ENCODE measurements at regions of chr14 and their contacts with region 1.

Region 1: GRCh38 chr14:35404449-35405303 is at the start of gene NFKBIA:
- DNase-seq: peak; percentile 96 to 97
- ATAC-seq: peak; percentile 51 to 81 (median 63)
- H3K4me3 ChIP-seq: peak within 1 kb of the TSS; percentile 90
- H3K4me3 Mint-ChIP-seq: peak within 1 kb of the TSS; percentile 99
- H3K27ac ChIP-seq: peak within 1 kb of the TSS; percentile 96
- H3K27ac Mint-ChIP-seq: peak within 1 kb of the TSS; percentile 98
- H3K4me1 ChIP-seq: peaks cover 46% of the 10 kb centered on the region
- H3K4me1 Mint-ChIP-seq: peaks cover 59 to 63% of the 10 kb centered on the region in 2 donors
- H3K27me3 ChIP-seq: no peaks in the 10 kb centered on the region
- H3K27me3 Mint-ChIP-seq: no peaks in the 10 kb centered on the region
- CTCF ChIP-seq: no peak
- total RNA-seq, gene NFKBIA: 2,039 to 3,339 (median 2,499) TPM

Region 2: DNA sequence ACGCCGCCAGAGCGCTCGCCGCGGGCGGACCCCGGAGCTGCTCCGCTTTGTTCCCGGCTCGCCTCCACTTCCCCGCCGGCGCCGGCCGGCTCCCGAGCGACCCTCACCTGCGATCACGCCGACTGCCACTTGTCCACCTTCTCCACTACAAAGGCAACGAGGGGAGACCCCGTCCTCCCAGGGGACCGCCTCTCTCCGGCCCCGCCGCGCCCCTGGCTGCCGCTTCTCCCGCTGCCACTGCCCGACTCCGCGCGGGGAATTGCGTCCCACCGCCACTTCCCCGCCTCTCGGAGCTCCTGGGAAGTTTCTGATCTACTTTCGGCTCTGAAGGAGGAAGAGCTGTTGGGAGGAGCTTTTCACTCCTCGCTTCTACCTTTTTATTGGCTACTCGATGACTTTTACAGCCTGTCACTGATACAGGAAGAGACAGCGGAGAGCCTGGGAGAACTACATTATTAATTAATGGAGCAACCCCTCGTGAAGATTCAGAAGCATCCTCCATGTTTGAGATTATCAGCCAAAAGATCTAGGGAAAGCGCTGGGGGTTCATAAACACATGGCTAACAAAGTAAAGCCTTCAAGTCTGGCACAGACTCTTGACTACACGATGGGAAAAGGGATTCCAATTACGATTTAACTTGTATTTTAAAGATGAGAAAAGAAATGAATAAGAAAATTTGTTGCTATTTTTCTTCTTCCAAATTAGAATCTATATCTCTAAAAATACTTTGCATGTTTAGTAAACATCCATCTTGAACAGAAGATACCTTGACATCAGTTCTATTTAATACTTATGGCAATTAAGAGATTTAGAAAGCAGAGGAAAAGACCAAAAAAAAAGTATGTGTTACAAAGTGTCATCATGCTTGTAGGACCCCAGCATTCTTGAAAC is 529.4 kb before region 1 on chr14 and contains the start of gene BAZ1A:
- intact Hi-C with region 1: loop called (anchors 5 kb)
- DNase-seq: peak; percentile 41 to 74
- ATAC-seq: peak in 1 of 3 donors; percentile 7
- H3K4me3 ChIP-seq: peak within 1 kb of the TSS; percentile 93
- H3K4me3 Mint-ChIP-seq: peak within 1 kb of the TSS; percentile 99
- H3K27ac ChIP-seq: peak within 1 kb of the TSS; percentile 98
- H3K27ac Mint-ChIP-seq: peak within 1 kb of the TSS; percentile 97 to 99
- H3K4me1 ChIP-seq: peaks cover 8% of the 10 kb centered on the region
- H3K4me1 Mint-ChIP-seq: peaks cover 31 to 34% of the 10 kb centered on the region in 2 donors
- H3K27me3 ChIP-seq: no peaks in the 10 kb centered on the region
- H3K27me3 Mint-ChIP-seq: no peaks in the 10 kb centered on the region
- CTCF ChIP-seq: no peak
- total RNA-seq, gene BAZ1A: 54.6 to 89.5 (median 64.6) TPM

Region 3: GRCh38 chr14:35046048-35046741 is 358.5 kb before region 1 on chr14 and contains the start of gene FAM177A1:
- intact Hi-C with region 1: loop called (anchors 2 kb)
- DNase-seq: peak; percentile 94 to 100
- ATAC-seq: peak; percentile 86 to 96 (median 87)
- H3K4me3 ChIP-seq: peak within 1 kb of the TSS; percentile 97
- H3K4me3 Mint-ChIP-seq: peak within 1 kb of the TSS; percentile 97
- H3K27ac ChIP-seq: peak within 1 kb of the TSS; percentile 100
- H3K27ac Mint-ChIP-seq: peak within 1 kb of the TSS; percentile 91 to 93
- H3K4me1 ChIP-seq: peaks cover 11% of the 10 kb centered on the region
- H3K4me1 Mint-ChIP-seq: peaks cover 25 to 31% of the 10 kb centered on the region in 2 donors
- H3K27me3 ChIP-seq: no peaks in the 10 kb centered on the region
- H3K27me3 Mint-ChIP-seq: no peaks in the 10 kb centered on the region
- CTCF ChIP-seq: no peak
- total RNA-seq, gene FAM177A1: 73.8 to 131 (median 79.6) TPM

Region 4: DNA sequence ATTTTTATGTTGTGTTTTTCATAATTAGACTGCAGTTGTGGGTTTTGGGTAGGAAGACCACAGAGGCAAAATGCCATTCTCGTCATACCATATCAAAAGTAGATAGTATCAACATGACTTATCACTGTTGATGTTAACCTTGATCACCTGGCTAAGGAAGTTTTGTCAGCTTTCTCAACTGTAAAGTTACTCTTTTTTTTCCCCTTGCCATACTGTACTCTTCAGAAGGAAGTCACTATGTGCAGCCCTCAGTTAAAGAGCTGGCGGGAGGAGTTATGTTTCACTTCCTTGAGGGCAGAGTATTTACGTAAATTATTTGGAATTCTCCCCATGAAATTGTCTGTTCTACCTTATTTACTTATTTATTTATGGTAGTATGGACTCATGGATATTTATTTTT is 203.6 kb before region 1 on chr14:
- intact Hi-C with region 1: loop called (anchors 2 kb)
- DNase-seq: peak in 1 of 2 donors; percentile 41
- ATAC-seq: no peak
- H3K4me3 ChIP-seq: no peak overlapping the region
- H3K4me3 Mint-ChIP-seq: peak overlapping the region; percentile 25
- H3K27ac ChIP-seq: no peak overlapping the region
- H3K27ac Mint-ChIP-seq: peak overlapping the region; percentile 60 to 64
- H3K4me1 ChIP-seq: peaks cover 24% of the 10 kb centered on the region
- H3K4me1 Mint-ChIP-seq: peaks cover 38 to 39% of the 10 kb centered on the region in 2 donors
- H3K27me3 ChIP-seq: no peaks in the 10 kb centered on the region
- H3K27me3 Mint-ChIP-seq: no peaks in the 10 kb centered on the region
- CTCF ChIP-seq: no peak

Region 5: GRCh38 chr14:35336494-35337268 is 68.0 kb before region 1 on chr14:
- intact Hi-C with region 1: loop called (anchors 2 kb)
- DNase-seq: no peak
- ATAC-seq: no peak
- H3K4me3 ChIP-seq: no peak overlapping the region
- H3K4me3 Mint-ChIP-seq: peak overlapping the region; percentile 70
- H3K27ac ChIP-seq: no peak overlapping the region
- H3K27ac Mint-ChIP-seq: peak overlapping the region; percentile 79 to 85
- H3K4me1 ChIP-seq: peaks cover 73% of the 10 kb centered on the region
- H3K4me1 Mint-ChIP-seq: peaks cover 33 to 53% of the 10 kb centered on the region in 2 donors
- H3K27me3 ChIP-seq: no peaks in the 10 kb centered on the region
- H3K27me3 Mint-ChIP-seq: no peaks in the 10 kb centered on the region
- CTCF ChIP-seq: no peak